H1 (cell line): ENCODE measurements at regions of chr5 and their contacts with region 1.

Region 1: DNA sequence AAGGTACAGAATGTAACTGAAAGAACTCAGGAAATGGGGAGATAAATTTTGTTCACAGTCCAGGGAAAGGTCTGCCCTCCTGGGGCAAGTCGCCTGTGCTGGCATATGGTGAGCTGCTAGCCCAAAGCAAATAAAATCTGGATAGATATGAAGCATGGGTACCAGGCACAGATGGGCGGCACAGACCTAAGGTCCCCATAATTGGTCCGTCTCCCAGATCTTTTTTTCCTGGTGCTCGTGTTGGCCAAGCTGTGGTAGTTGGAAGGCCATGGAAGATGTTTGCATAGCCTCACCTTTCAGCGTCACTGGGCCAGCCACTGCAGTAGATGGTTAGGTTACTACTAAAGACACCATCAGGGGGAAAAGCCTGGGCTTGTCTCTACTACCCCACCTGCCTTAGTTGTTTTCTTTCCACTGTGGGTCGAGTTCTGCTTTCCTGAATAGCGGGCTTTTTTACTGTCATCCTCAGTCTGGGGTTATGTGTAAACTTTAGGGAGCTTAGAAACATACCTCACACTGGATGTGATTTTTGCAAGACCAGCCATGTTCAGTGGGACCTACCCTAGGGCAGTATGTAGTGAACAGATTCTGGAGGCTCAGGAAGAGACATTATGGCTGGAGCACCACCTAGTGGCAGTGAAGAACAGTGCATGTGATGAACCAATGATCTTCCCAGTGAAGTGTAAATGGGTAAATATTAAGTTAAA is 24.2 kb upstream of the GLRX start:
- DNase-seq: peak in 1 of 2 experiments; percentile 71
- H3K4me3 ChIP-seq: no peak overlapping the region
- H3K27ac ChIP-seq: no peak overlapping the region
- H3K4me1 ChIP-seq: no peaks in the 10 kb centered on the region
- H3K27me3 ChIP-seq: no peaks in the 10 kb centered on the region
- CTCF ChIP-seq: peak; percentile 20 to 92 (median 88)
- EP300 ChIP-seq: no peak
- POLR2A ChIP-seq: no peak
- RAD21 ChIP-seq: peak; percentile 98

Region 2: DNA sequence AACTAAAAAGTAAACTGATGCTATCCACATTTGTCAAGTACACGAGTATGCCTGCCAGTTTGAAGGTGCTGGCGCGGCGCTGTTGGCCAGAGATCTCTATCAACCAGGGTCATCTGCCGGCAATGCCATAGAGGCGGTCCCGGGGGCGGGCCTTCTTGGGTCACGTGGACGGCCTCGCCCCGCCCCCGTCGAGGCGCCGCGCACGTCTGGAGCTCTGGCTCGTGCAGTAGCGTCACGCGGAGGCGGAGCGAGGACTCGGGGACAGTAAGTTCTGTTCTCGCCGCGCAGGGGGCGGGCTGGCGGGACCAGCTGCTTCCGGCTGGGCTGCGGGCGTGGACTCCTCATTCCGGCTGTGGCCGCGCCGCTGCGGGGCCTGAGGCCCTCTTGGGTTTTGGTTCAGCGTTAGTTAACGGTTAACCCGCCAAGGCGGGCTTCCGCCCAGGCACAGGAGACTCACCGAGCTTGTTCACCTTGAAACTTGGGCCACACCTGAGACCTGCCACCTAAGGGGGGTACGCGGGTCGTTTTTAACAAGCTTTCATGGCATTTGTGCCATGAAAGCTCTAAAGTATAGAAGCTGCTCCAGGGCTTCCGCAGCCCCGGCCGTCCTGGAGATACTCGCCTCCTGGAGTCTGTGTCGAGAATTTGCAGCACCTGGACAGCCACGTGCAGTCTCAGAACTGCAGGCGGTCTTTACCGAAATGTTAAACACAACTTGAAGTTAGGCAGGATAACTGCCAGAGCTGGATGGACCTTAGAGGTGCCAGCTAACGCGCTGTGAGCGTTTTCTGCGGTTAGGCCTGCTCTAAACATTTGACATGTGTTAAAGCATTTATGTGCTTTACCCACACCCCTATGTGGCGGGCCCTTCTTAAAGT is 199.9 kb before region 1 on chr5 and contains the start of gene RFESD:
- CTCF ChIA-PET with region 1: interaction called, 42 read pairs
- POLR2A ChIA-PET with region 1: no interaction called
- DNase-seq: peak; percentile 92 to 97
- H3K4me3 ChIP-seq: peak within 1 kb of the TSS; percentile 47 to 63 (median 56)
- H3K27ac ChIP-seq: peak within 1 kb of the TSS; percentile 20; the same call in 1 of the 2 replicates
- H3K4me1 ChIP-seq: peaks cover 0 to 6% (median 3%) of the 10 kb centered on the region in 4 experiments; a peak in 2 of 7 replicates
- H3K27me3 ChIP-seq: no peaks in the 10 kb centered on the region
- CTCF ChIP-seq: peak in 2 of 3 experiments; percentile 7 to 9; a peak in 2 of 4 replicates
- EP300 ChIP-seq: peak in 1 of 2 experiments; percentile 48; a peak in 1 of 3 replicates
- POLR2A ChIP-seq: peak in 1 of 2 experiments; percentile 81; a peak in 2 of 3 replicates
- RAD21 ChIP-seq: peak in 1 of 2 experiments; percentile 26; a peak in 1 of 4 replicates
- total RNA-seq, gene RFESD: 2.0 and 4.3 TPM in 2 replicates

Region 3: GRCh38 chr5:95664204-95664786 is 182.4 kb before region 1 on chr5:
- CTCF ChIA-PET with region 1: interaction called, 23 read pairs
- POLR2A ChIA-PET with region 1: no interaction called
- DNase-seq: no peak
- H3K4me3 ChIP-seq: no peak overlapping the region
- H3K27ac ChIP-seq: no peak overlapping the region
- H3K4me1 ChIP-seq: no peaks in the 10 kb centered on the region
- H3K27me3 ChIP-seq: no peaks in the 10 kb centered on the region
- CTCF ChIP-seq: peak in 2 of 3 experiments; percentile 41 to 63; a peak in 2 of 4 replicates
- EP300 ChIP-seq: no peak
- POLR2A ChIP-seq: no peak
- RAD21 ChIP-seq: peak; percentile 55 to 63

Region 4: GRCh38 chr5:95730730-95731570 is 115.8 kb before region 1 on chr5 and contains the start of gene RHOBTB3:
- CTCF ChIA-PET with region 1: interaction called, 13 read pairs
- POLR2A ChIA-PET with region 1: no interaction called
- DNase-seq: peak in 1 of 2 experiments; percentile 84
- H3K4me3 ChIP-seq: peak within 1 kb of the TSS; percentile 78 to 84 (median 82)
- H3K27ac ChIP-seq: no peak within 1 kb of the TSS
- H3K4me1 ChIP-seq: peaks cover 0 to 12% (median 8%) of the 10 kb centered on the region in 4 experiments; a peak in 5 of 7 replicates
- H3K27me3 ChIP-seq: peaks cover 1 to 43% (median 19%) of the 10 kb centered on the region in 4 experiments
- CTCF ChIP-seq: no peak
- EP300 ChIP-seq: no peak
- POLR2A ChIP-seq: peak in 1 of 2 experiments; percentile 64; a peak in 1 of 3 replicates
- RAD21 ChIP-seq: no peak; a peak in 1 of 4 replicates
- total RNA-seq, gene RHOBTB3: 8.2 and 11.5 TPM in 2 replicates

Region 5: GRCh38 chr5:95822542-95823181 is 24.0 kb before region 1 on chr5 and contains the start of gene GLRX:
- CTCF ChIA-PET with region 1: interaction called, 12 read pairs
- POLR2A ChIA-PET with region 1: no interaction called
- DNase-seq: peak; percentile 47 to 68
- H3K4me3 ChIP-seq: peak within 1 kb of the TSS; percentile 73 to 89 (median 78)
- H3K27ac ChIP-seq: no peak within 1 kb of the TSS
- H3K4me1 ChIP-seq: peaks cover 5 to 20% (median 16%) of the 10 kb centered on the region in 4 experiments; a peak in 6 of 7 replicates
- H3K27me3 ChIP-seq: no peaks in the 10 kb centered on the region; a peak in 1 of 7 replicates
- CTCF ChIP-seq: no peak
- EP300 ChIP-seq: no peak
- POLR2A ChIP-seq: peak in 1 of 2 experiments; percentile 80; a peak in 2 of 3 replicates
- RAD21 ChIP-seq: no peak
- total RNA-seq, gene GLRX: 21.6 and 22.9 TPM in 2 replicates

Region 6: DNA sequence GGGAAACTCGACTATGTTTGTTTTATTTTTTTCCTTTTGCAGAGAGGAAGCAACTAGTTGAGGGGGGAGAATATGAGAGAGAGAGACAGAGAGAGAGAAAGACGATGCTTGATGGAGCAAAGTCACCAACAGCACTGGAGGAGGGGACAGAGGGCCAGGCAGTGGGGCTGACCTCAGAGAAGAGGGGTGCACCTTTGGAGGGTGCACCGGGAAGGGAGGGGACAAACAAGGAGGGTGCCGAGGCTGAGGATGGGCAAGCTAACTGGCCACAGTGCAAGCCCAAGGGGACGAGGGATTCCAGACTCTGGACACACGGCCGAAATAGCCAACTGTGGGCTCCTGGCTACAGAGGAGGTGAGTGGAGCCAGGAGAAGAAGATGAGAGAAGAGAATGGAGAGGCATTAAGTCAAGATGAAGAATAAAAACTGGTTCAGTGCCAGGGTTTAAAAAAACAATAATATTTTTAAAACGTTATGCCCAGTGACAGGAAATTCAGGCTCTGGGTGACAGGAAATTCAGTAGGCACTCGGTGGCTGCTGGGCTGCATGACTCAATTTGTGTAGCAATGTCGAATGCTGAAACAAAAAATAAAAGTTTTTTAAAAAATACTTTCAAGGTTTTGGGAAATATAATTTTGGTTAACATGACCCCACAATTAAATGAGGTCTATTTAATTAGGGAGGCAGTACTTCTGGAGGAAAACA is 10.9 kb before region 1 on chr5:
- CTCF ChIA-PET with region 1: interaction called, 17 read pairs
- POLR2A ChIA-PET with region 1: interaction called, 3 read pairs
- DNase-seq: no peak
- H3K4me3 ChIP-seq: no peak overlapping the region
- H3K27ac ChIP-seq: no peak overlapping the region
- H3K4me1 ChIP-seq: peaks cover 0 to 3% (median 0%) of the 10 kb centered on the region in 4 experiments; a peak in 2 of 7 replicates
- H3K27me3 ChIP-seq: no peaks in the 10 kb centered on the region
- CTCF ChIP-seq: no peak
- EP300 ChIP-seq: no peak
- POLR2A ChIP-seq: no peak
- RAD21 ChIP-seq: no peak

Region 7: GRCh38 chr5:95915999-95916686 is 69.4 kb after region 1 on chr5:
- CTCF ChIA-PET with region 1: no interaction called
- POLR2A ChIA-PET with region 1: no interaction called
- DNase-seq: no peak
- H3K4me3 ChIP-seq: no peak overlapping the region
- H3K27ac ChIP-seq: no peak overlapping the region
- H3K4me1 ChIP-seq: peaks cover 0 to 5% (median 2%) of the 10 kb centered on the region in 4 experiments; a peak in 2 of 7 replicates
- H3K27me3 ChIP-seq: no peaks in the 10 kb centered on the region
- CTCF ChIP-seq: no peak
- EP300 ChIP-seq: no peak
- POLR2A ChIP-seq: no peak
- RAD21 ChIP-seq: no peak